ENCODE measurements at regions of chr5 and their contacts with region 1.

Region 1: DNA sequence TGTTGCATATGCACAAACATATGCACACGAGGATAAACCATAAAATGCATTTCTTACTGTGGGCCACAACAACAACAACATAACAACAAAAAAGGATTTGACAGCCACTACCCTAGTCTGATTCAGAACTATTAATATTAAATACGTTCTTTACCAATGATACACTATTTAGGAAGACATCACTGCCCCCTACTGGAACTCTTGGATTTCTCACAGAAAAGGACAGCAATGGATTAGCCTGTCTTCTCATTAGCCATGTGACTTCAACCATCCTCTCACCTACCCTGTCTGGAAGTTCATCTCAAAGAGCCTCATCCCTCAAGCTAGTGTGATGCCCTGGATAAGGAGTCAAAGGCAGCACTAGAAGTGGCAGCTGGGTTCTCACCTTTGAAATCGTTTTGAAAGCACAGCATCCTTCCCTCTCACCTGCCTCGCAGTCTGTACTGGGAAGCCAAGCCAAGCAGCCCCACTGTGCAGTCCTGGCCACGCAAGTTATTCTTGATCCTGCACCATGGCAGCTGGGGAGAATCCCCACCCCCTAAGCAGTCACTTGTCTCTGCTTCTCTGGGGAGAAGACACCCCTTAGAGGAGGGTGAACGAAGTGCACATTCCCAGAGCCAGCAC is 64.6 kb downstream of the SH3TC2 start:
- DNase-seq: no peak
- H3K4me3 Mint-ChIP-seq: no peak overlapping the region
- H3K27ac Mint-ChIP-seq: no peak overlapping the region
- H3K4me1 Mint-ChIP-seq: no peaks in the 10 kb centered on the region
- H3K27me3 Mint-ChIP-seq: peaks cover 10% of the 10 kb centered on the region

Region 2: DNA sequence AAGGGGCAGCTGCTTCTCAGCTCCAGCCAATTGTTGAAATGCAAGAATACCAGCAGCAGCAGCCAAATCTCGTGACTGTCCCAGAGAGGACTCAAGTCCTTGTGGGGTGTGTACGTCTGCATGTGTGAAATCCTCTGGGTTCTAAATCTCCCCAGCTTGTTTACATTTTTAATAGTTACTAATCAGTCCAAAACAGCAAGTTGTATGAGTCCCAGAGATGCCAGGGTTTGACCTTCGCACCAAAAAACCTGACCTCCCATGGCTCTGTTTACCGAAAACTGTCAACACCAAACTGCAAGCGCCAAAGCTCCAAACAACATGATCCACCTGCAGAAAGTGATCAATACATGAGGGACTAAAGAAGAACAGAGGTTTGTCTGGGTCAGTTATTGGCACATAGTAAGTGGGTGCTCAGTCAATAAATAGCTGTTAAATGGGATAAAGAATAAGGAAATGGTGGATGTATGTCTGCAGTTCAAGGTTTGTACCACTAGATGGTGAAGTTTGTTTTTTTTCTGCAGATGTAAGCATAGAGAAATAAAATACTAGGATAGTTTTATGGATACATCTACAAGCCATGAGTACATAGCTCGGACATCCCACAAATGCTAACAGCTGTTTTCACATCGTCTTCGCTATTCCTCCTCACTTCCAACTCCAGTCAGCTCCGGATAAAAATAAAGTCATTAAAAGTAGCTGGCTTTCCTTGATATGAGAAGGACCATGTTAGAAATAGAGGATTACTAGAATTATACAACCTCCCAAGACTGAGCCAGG is 257.1 kb before region 1 on chr5:
- CTCF ChIA-PET with region 1: interaction called, 90 read pairs
- POLR2A ChIA-PET with region 1: no interaction called
- intact Hi-C with region 1: loop called (anchors 1 kb)
- DNase-seq: no peak
- H3K4me3 Mint-ChIP-seq: no peak overlapping the region
- H3K27ac Mint-ChIP-seq: no peak overlapping the region
- H3K4me1 Mint-ChIP-seq: no peaks in the 10 kb centered on the region
- H3K27me3 Mint-ChIP-seq: peaks cover 17% of the 10 kb centered on the region

Region 3: DNA sequence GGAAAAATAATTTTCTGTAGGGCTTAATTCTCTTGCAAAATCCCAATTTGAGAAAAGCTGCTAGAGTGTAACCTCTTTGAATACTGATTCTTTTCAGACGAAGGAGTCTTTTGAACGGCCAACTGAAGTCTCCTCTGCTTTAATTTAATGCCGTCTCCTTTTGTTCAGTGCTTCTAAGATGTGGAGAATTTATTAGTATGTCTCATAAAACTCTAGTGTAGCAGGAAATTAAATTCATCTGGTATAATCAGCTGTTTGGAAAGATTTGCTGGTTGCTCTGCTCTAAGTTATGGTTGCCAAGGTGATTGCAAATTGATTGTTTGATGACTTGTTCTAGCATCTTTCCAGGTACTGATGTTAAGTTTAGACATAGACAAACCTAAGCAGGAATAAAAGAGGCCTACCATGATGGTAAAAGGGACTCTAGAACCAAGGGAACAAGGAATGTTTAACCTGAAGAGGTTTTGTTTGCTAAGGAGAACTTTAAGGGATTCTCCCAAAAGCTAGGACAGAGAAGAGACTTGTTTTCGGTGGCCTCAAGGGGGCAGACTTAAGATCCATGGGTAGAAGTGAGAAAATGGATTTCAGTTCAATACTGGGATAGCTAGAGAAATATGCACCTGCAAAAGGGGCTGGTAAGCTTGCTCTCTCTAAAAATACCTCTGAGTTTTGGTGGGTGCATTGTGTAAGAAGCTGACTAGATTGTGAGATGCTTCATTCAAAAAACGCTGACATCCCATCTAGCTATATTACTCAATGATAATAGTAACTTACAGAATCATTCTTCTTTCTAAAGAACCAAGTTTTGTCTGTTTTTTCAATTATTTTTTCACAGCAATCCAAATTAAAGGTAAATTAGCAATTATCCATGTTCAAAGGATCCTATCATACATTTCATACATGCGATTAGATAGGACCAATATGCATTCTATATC is 177.6 kb before region 1 on chr5:
- CTCF ChIA-PET with region 1: interaction called, 6 read pairs
- POLR2A ChIA-PET with region 1: no interaction called
- intact Hi-C with region 1: loop called (anchors 1 kb)
- DNase-seq: no peak
- H3K4me3 Mint-ChIP-seq: no peak overlapping the region
- H3K27ac Mint-ChIP-seq: no peak overlapping the region
- H3K4me1 Mint-ChIP-seq: peaks cover 6% of the 10 kb centered on the region
- H3K27me3 Mint-ChIP-seq: peaks cover 5% of the 10 kb centered on the region

Region 4: DNA sequence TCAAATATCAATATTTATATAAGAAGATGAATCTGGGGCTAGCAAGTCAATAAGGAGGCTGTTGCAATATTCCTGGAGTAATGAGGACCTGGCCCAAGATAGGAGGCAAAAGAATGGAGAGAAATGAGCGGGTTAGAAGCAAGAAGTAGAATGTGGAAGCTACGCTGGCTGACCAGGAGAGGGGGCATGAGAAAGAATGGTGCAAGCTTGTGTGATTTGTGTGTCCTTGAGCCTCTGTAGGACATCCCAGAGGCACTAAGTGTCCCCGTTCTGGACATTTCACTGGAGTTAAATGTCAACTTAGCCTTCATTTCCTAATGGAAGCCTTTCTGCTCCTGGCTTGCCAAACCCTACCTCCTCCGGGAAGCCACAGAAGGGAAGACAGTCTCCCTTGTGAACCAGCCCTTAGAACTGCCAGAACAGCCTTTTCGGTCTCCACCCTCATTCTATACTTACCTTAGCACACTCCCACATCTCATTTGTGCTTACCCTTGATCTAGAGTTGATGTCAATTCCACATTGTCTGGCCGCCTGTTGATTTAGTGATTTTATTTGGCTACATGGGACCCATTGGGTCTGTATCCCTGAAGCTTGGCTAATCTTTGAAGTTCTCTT is 953.0 kb after region 1 on chr5:
- CTCF ChIA-PET with region 1: no interaction called
- POLR2A ChIA-PET with region 1: no interaction called
- intact Hi-C with region 1: no loop called
- DNase-seq: no peak
- H3K4me3 Mint-ChIP-seq: no peak overlapping the region
- H3K27ac Mint-ChIP-seq: no peak overlapping the region
- H3K4me1 Mint-ChIP-seq: no peaks in the 10 kb centered on the region
- H3K27me3 Mint-ChIP-seq: peaks cover 6% of the 10 kb centered on the region

Measured in activated CD4-positive, alpha-beta memory T cell treated with anti-CD3 and anti-CD28 coated beads for 36 hours (primary cell).